HAP-1 (cell line): ENCODE measurements at regions of chr10 and their contacts with region 1.

Region 1: GRCh38 chr10:92880233-92880861 is 32.0 kb downstream of the EXOC6 start:
- DNase-seq: peak; percentile 37 to 47
- H3K4me3 ChIP-seq: no peak overlapping the region
- H3K4me1 ChIP-seq: peaks cover 11% of the 10 kb centered on the region
- H3K27me3 ChIP-seq: no peaks in the 10 kb centered on the region

Region 2: DNA sequence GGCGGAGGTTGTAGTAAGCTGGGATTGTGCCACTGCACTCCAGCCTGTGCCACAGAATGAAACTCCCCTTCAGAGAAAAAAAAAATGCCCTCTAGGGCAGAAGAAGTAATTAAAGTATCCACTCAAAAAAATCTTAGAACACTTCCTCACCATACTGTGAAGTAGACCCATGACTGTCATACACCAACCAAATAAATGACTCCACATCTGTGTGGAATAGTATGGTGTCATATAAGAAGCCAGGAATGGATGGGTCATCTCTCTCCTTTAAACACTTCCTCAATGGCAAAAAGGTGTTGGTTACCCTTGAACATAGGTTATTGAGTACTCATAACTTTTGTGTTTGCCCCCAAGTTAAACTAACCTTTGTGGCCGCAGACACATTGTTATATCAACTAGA is 1708.0 kb before region 1 on chr10:
- in situ Hi-C with region 1: no loop called
- DNase-seq: no peak
- H3K4me3 ChIP-seq: no peak overlapping the region
- H3K4me1 ChIP-seq: no peaks in the 10 kb centered on the region
- H3K27me3 ChIP-seq: no peaks in the 10 kb centered on the region

Region 3: DNA sequence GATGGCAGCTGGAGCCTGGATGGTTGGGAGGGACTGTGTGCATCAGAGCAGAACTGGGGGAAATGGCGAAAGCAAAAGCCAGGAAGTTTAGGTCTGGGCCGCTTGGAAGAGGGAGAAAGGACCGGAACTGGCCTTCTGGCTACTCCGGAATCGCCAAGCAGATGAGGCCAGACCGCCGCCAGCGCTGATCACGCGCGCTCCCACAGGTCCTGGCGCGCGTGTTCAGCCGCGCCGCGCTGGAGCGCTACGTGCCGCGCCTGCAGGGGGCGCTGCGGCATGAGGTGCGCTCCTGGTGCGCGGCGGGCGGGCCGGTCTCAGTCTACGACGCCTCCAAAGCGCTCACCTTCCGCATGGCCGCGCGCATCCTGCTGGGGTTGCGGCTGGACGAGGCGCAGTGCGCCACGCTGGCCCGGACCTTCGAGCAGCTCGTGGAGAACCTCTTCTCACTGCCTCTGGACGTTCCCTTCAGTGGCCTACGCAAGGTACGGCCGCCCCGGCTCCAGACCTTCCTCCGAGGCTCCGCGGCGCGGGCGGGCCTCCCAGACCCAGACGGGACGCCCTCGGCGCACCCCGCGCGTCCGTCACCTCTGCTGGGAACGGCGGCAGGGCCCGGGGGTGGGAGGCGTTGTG is 182.3 kb after region 1 on chr10:
- in situ Hi-C with region 1: loop called (anchors 25 kb)
- DNase-seq: no peak
- H3K4me3 ChIP-seq: no peak overlapping the region
- H3K4me1 ChIP-seq: no peaks in the 10 kb centered on the region
- H3K27me3 ChIP-seq: peaks cover 4% of the 10 kb centered on the region

Region 4: GRCh38 chr10:93352638-93353383 is 472.5 kb after region 1 on chr10:
- in situ Hi-C with region 1: loop called (anchors 25 kb)
- DNase-seq: peak in 1 of 2 experiments; percentile 69
- H3K4me3 ChIP-seq: no peak overlapping the region
- H3K4me1 ChIP-seq: no peaks in the 10 kb centered on the region
- H3K27me3 ChIP-seq: no peaks in the 10 kb centered on the region

Region 5: GRCh38 chr10:93496322-93497041 is 616.1 kb after region 1 on chr10 and contains the start of gene CEP55:
- in situ Hi-C with region 1: loop called (anchors 25 kb)
- DNase-seq: peak; percentile 94 to 96
- H3K4me3 ChIP-seq: peak within 1 kb of the TSS; percentile 76
- H3K4me1 ChIP-seq: peaks cover 20% of the 10 kb centered on the region
- H3K27me3 ChIP-seq: no peaks in the 10 kb centered on the region

Region 6: DNA sequence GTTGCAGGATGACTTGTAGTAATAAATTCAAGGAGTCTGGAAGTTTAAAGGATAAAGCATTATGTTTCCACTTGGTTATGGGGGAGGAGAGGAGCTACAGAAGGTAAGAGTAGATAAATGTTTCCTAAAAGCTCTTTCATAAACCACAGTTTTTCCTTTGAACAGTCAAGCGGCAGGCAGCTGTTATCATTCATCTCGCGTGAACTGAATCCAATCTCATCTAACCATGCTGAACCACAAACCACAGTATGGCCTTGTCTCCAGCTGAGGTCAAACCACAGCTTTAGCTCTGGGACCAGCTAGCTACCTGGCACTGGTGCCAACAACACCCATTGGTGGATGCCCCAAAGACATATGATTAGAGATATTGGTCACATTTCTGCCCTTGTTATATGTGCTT is 1419.1 kb after region 1 on chr10:
- in situ Hi-C with region 1: no loop called
- DNase-seq: no peak
- H3K4me3 ChIP-seq: no peak overlapping the region
- H3K4me1 ChIP-seq: no peaks in the 10 kb centered on the region
- H3K27me3 ChIP-seq: no peaks in the 10 kb centered on the region